Right lobe of liver (tissue), 6 donors: ENCODE measurements at regions of chr9 and their contacts with region 1.

Region 1: DNA sequence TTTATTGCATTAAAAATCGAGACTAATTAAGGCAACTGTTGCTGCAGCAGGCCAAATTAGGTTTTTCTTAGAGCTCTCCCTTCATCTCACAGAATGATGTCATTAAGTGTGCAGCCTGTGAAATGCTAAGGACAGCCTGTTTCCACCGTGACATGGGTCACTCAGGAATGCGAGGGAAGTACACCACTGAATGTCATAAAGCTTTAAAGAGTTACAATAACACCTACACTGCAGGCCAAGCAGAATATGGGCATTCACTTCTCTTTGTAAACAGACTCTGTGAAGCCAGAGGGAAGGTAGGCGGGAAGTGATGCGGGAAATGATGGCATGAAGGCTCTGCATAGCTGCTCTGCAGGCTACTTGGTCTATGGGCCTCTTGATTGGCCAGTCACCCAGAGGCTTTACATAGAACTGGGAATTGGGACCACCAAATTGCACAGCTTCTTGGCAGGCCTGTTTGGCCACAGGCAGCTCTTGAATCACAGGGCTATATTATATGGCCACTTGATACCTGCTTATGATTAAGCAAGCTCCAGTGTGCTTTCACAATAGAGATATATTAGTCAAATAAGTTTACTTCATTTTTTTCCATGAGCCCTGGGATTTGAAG is 28.4 kb upstream of the AOPEP start:
- DNase-seq: no peak
- ATAC-seq: no peak
- H3K4me3 ChIP-seq: no peak overlapping the region
- H3K27ac ChIP-seq: no peak overlapping the region
- H3K4me1 ChIP-seq: peaks cover 0 to 2% (median under 1%) of the 10 kb centered on the region in 4 donors
- H3K27me3 ChIP-seq: no peaks in the 10 kb centered on the region
- CTCF ChIP-seq: no peak
- POLR2A ChIP-seq: no peak

Region 2: DNA sequence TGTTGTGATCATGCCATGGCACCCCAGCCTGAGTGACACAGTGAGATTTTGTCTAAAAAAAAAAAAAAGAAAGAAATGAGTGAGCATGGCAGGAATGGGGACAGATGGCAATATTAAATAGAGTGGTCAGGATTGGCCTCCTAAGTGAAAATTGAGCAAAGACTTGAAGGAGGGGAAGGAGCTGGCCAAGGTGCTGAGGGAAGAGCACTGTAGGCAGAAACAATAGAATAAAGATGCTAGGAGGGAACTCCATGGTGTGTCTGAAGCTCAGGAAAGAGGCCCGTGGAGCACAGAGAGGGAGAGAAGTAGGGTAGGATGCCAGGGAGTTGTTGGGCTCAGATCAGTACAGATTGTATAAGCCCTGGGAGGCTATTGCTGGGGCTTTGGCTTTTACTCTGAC is 207.6 kb before region 1 on chr9:
- intact Hi-C with region 1: no loop called
- DNase-seq: no peak
- ATAC-seq: no peak
- H3K4me3 ChIP-seq: no peak overlapping the region
- H3K27ac ChIP-seq: no peak overlapping the region
- H3K4me1 ChIP-seq: no peaks in the 10 kb centered on the region
- H3K27me3 ChIP-seq: no peaks in the 10 kb centered on the region
- CTCF ChIP-seq: no peak
- POLR2A ChIP-seq: no peak

Region 3: DNA sequence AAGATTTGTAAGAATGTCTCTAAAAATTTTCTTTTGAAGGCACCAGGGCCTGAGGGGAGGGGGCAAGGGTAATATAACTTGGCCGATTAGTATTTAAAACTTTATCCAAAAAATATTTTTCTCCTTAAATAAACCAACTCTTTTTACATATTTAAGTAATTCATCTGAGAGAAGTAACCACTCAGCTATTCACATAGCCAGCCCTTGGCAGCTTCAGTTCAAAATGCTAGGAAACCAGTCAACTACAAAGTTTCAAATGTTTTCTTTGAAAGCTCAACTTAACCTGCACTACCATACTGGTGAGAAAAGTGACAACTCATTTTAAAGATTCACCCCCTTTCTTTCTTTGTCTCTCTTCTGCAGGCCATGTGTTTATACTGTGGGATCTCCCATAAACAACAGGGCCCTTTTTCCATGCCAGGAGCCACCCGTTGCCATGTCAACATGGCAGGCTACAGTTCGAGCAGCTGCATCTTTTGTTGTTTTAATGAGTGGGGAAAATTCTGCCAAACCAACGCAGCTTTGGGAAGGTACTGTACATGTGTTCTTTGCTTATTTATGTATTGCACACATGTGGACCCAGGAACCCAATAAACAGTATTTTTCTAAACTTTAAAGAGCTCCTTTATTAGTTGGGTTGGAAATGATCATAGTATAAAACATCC is 74.7 kb after region 1 on chr9:
- intact Hi-C with region 1: loop called in 1 of 2 experiments (anchors 10 kb)
- DNase-seq: no peak
- ATAC-seq: no peak
- H3K4me3 ChIP-seq: no peak overlapping the region
- H3K27ac ChIP-seq: no peak overlapping the region
- H3K4me1 ChIP-seq: peaks cover 0 to 5% (median 0%) of the 10 kb centered on the region in 4 donors
- H3K27me3 ChIP-seq: no peaks in the 10 kb centered on the region
- CTCF ChIP-seq: no peak
- POLR2A ChIP-seq: no peak